Activated CD8-positive, alpha-beta T cell treated with anti-CD3 and anti-CD28 coated beads for 36 hours (primary cell): ENCODE measurements at regions of chr17 and their contacts with region 1.

Region 1: DNA sequence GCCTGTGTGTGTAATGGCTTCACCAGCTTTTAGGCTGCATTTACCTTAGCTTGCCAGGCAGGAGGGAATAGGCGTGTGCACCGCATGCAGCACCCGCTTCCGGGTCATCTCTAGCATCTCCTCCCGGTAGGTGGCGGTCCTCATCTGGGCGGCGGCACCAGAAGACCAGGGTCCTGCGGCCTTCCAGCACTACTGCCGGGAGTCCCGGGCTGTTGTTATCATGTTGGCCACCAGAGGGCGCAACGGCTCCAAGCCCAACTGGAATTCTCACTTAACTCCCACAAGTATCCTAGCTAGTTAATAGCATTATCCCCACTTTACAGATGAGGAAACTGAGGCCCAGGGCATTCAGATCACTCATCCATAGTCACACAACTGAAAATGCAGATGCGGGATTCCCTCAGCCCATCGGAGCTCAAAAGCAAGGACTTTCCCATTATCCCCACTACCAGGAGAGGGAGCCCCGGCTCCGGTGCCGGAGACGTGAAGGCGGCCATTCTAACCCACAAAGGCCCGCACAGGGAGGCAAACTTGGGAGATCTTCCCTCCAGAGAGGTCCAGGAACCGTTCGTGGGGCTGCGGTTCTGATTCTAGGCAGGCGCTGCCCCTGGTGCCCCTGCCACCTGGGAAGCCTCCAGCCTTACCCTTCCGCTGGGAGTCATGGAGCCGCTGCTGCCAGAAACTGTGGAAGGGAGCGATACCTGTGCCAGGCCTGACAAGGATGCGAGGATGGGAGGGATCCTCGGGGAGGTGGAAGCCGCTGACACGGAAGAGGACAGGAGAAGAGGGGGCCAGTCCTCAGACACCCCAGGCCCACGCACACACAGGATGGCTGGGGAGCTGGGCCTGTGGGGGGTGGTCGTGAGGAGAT is 23.9 kb downstream of the LGALS9 start:
- DNase-seq: peak; percentile 85
- ATAC-seq: peak; percentile 97
- H3K4me3 Mint-ChIP-seq: no peak overlapping the region
- H3K27ac Mint-ChIP-seq: no peak overlapping the region
- H3K4me1 Mint-ChIP-seq: peaks cover 5% of the 10 kb centered on the region
- H3K27me3 Mint-ChIP-seq: peaks cover 2% of the 10 kb centered on the region
- CTCF ChIP-seq: peak; percentile 97

Region 2: DNA sequence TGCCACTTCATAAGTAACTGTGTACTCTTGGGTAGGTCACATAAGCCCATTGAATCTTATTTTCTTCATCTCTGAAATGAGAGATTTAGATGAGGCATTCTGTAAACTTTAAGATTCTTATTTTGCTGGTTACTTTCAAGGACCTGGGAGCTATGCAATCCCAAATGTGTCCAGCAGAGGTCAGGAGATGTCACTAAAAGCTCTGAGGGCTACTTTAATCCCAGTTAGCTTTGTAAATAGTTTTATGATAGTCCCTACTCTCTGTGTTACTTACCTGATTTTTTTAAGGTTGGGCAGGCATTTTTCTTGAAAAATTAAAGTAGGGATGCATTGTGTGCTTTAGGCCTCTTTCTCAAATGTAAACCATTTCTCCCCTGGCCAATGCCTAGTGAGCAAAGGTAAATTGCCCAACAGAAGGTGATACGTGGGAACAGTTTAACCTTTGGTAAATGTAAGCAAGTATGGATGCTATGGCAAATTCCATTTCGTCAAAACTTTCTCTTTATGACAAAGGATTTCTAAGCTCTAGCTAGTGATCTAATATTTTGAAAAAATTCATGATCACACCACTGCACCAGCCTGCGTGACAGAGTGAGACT is 418.1 kb before region 1 on chr17:
- CTCF ChIA-PET with region 1: interaction called, 27 read pairs
- POLR2A ChIA-PET with region 1: no interaction called
- intact Hi-C with region 1: no loop called
- DNase-seq: peak; percentile 91
- ATAC-seq: peak; percentile 77
- H3K4me3 Mint-ChIP-seq: no peak overlapping the region
- H3K27ac Mint-ChIP-seq: no peak overlapping the region
- H3K4me1 Mint-ChIP-seq: peaks cover 16% of the 10 kb centered on the region
- H3K27me3 Mint-ChIP-seq: peaks cover 3% of the 10 kb centered on the region
- CTCF ChIP-seq: peak; percentile 83

Region 3: DNA sequence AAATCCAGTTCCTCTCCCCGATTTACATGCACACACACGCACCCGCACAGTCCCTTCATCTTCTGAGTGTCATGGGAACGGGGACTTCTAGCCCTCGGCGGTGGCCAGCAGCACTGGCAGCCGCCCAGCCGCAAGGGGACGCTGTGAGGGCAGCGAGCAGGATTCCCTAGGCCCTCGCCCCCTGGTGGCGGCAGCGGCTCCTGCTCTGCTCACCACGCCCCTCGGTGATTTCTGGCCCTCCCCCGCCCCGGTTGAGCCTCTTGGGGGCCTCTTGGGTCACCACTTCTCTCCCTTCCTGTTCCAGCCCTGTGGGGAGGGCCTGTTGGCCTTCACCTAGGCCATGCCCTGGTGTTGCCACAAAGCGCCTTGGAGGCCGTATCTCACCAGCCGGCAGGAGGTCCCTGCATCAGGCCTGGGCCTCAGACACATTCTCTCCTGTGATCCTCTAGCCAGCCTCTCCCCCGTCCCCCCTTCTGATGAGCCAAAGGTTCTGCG is 273.8 kb before region 1 on chr17:
- CTCF ChIA-PET with region 1: interaction called, 10 read pairs
- POLR2A ChIA-PET with region 1: no interaction called
- intact Hi-C with region 1: no loop called
- DNase-seq: peak; percentile 91
- ATAC-seq: peak; percentile 98
- H3K4me3 Mint-ChIP-seq: no peak overlapping the region
- H3K27ac Mint-ChIP-seq: no peak overlapping the region
- H3K4me1 Mint-ChIP-seq: no peaks in the 10 kb centered on the region
- H3K27me3 Mint-ChIP-seq: peaks cover 11% of the 10 kb centered on the region
- CTCF ChIP-seq: peak; percentile 100

Region 4: GRCh38 chr17:27616414-27616813 is 38.5 kb before region 1 on chr17:
- CTCF ChIA-PET with region 1: interaction called, 65 read pairs
- POLR2A ChIA-PET with region 1: no interaction called
- intact Hi-C with region 1: no loop called
- DNase-seq: peak; percentile 33
- ATAC-seq: peak; percentile 63
- H3K4me3 Mint-ChIP-seq: no peak overlapping the region
- H3K27ac Mint-ChIP-seq: peak overlapping the region; percentile 79
- H3K4me1 Mint-ChIP-seq: peaks cover 42% of the 10 kb centered on the region
- H3K27me3 Mint-ChIP-seq: no peaks in the 10 kb centered on the region
- CTCF ChIP-seq: no peak

Region 5: DNA sequence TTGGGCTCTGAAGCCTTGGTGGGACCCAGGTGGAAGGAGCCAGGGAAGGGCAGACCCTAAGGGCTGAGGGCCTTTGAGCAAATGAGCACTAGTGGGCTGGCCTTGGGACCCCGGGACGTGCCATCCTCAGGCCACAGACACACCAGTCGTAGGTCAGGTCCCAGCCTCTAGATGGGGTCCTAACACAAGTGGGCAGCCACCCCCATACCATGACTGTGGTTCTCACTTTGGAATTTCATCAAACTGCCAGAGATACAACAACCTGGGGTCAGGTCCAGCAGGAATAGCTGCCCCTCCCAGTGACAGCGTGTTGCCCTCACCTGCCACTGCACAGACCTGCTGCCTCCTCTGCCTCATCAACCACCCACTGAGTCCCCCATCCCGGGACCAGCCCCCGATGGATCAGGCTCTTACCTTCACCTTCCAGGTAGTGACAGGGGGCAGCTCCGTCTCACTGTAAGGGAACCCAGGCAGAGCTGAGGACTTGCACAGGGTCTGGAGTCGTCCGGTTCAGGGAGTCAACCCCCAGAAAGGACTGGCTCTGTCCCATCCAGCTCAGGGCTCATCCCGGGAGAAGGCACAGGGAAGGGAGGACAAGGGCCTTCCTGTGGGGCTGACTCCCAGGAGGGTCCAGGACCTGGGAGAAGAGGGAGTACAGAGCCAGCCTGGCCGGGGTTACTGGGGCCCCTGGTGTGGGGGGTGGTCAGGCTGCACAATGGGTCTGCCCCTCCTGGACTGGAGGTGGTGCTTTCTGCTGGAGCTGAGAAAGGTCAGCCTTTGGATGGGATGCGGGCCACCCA is 16.1 kb after region 1 on chr17:
- CTCF ChIA-PET with region 1: interaction called, 10 read pairs
- POLR2A ChIA-PET with region 1: no interaction called
- intact Hi-C with region 1: no loop called
- DNase-seq: no peak
- ATAC-seq: no peak
- H3K4me3 Mint-ChIP-seq: no peak overlapping the region
- H3K27ac Mint-ChIP-seq: no peak overlapping the region
- H3K4me1 Mint-ChIP-seq: no peaks in the 10 kb centered on the region
- H3K27me3 Mint-ChIP-seq: no peaks in the 10 kb centered on the region
- CTCF ChIP-seq: no peak

Region 6: DNA sequence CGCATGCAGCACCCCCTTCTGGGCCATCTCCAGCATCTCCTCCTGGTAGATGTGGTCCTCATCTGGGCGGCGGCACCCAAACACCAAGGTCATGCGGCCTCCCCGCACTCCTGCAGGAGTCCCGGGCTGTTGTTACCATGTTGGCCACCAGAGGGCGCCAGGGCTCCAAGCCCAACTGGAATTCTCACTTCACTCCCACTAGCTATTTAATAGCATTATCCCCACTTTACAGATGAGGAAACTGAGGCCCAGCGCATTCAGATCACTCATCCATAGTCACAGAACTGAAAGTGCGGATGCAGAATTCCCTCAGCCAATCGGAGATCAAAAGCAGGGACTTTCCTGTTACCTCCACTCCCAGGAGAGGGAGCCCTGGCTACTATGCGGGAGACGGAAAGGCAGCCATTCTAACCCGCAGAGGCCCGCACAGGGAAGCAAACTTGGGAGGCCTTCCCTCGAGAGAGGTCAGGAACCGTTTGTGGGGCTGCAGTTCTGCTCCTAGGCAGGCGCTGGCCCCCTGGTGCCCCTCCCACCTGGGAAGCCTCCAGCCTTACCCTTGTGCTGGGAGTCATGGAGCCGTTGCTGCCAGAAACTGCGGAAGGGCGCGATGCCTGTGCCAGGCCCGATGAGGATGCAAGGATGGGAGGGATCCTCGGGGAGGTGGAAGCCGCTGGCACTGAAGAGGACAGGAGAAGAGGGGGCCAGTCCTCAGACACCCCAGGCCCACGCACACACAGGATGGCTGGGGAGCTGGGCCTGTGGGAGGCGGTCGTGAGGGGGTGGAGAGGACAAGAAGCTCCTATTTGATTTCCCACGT is 105.4 kb after region 1 on chr17:
- CTCF ChIA-PET with region 1: interaction called, 82 read pairs
- POLR2A ChIA-PET with region 1: no interaction called
- intact Hi-C with region 1: loop called (anchors 2 kb)
- DNase-seq: peak; percentile 82
- ATAC-seq: peak; percentile 68
- H3K4me3 Mint-ChIP-seq: no peak overlapping the region
- H3K27ac Mint-ChIP-seq: no peak overlapping the region
- H3K4me1 Mint-ChIP-seq: no peaks in the 10 kb centered on the region
- H3K27me3 Mint-ChIP-seq: no peaks in the 10 kb centered on the region
- CTCF ChIP-seq: peak; percentile 94